ENCODE measurements at regions of chr16 and their contacts with region 1.

Region 1: DNA sequence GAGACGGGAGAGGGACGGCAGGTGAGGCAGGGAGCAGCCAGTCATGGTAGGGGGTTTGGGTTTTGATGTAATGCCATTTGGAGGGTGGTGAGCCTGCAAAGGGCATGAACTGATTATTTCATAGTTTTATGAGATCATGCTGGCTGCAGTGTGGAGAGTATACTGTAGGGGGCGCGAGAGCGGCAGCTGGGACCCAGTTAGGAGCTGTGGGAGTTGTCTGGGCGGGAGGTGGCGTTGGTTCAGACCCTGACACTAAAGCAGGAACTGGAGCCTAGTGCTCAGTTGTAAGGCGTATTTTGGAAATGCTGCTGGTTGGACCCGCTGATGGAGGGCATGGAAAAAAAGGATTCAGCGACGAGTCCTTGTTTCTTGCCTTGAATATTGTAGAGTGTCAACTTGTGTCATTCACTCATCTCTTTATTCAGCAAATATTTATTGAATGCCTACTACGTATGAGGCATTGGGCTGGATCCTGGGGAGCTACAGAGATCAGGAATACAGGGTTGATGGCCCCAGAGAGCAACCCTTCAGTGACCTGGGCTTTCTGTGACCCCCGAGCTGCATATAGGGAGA is 23.7 kb upstream of the KDM8 start:
- DNase-seq: peak; percentile 81 to 86 (median 85)
- H3K4me3 ChIP-seq: no peak overlapping the region
- H3K4me3 Mint-ChIP-seq: peak overlapping the region in 3 of 8 donors; percentile 0 to 64 (median 22)
- H3K27ac ChIP-seq: no peak overlapping the region
- H3K27ac Mint-ChIP-seq: peak overlapping the region; percentile 1 to 93 (median 85)
- H3K4me1 ChIP-seq: peaks cover 25% of the 10 kb centered on the region
- H3K4me1 Mint-ChIP-seq: peaks cover 21 to 46% (median 31%) of the 10 kb centered on the region in 4 donors
- H3K27me3 ChIP-seq: no peaks in the 10 kb centered on the region
- H3K27me3 Mint-ChIP-seq: no peaks in the 10 kb centered on the region

Region 2: DNA sequence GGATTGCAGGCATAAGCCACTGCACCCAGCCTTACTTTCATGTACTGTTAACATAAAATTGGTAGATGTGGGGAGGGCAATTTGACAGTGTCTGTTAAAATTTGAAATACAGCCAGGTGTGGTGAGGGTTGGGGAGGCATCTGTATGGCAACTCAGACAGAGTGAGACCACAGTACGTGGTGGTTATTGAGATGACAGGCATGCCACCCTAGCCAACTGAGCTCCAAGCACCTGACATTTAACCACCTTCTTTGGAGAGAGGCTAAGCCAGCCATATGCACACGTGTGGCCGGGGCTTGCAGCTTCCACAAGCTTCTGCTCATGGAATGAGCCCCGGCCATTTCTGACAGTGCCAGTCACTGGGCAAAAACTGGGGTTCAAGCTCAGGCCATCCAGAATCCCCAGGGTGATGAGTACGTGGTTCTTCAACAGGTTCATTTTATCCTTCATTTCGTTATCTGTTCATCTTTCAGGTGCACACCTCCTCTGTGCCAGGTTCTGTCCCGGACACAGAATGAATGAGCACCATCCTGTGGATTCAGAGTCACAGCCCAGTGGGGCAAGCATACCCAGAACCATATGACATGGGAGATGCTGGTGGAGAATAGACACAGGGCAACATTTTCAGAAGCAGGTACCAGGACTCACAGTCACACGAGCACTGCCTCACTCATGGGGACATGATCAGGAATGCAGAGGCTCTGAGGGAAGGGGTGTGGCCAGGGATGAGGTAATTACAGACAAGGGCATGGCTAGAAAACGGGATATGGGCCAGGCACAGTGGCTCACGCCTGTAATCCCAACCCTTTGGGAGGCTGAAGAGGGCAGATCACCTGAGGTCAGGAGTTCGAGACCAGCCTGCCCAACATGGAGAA is 76.6 kb before region 1 on chr16:
- CTCF ChIA-PET with region 1: no interaction called
- POLR2A ChIA-PET with region 1: no interaction called
- intact Hi-C with region 1: no loop called
- DNase-seq: no peak
- H3K4me3 ChIP-seq: no peak overlapping the region
- H3K4me3 Mint-ChIP-seq: no peak overlapping the region
- H3K27ac ChIP-seq: no peak overlapping the region
- H3K27ac Mint-ChIP-seq: no peak overlapping the region
- H3K4me1 ChIP-seq: no peaks in the 10 kb centered on the region
- H3K4me1 Mint-ChIP-seq: no peaks in the 10 kb centered on the region
- H3K27me3 ChIP-seq: peaks cover 4% of the 10 kb centered on the region
- H3K27me3 Mint-ChIP-seq: peaks cover 6% of the 10 kb centered on the region in 2 donors

Region 3: GRCh38 chr16:27203429-27204231 is 24.0 kb after region 1 on chr16 and contains the start of gene KDM8:
- CTCF ChIA-PET with region 1: interaction called, 164 read pairs
- POLR2A ChIA-PET with region 1: interaction called, 95 read pairs
- intact Hi-C with region 1: no loop called
- DNase-seq: peak; percentile 99 to 100 (median 100)
- H3K4me3 ChIP-seq: peak within 1 kb of the TSS; percentile 61 to 85
- H3K4me3 Mint-ChIP-seq: peak within 1 kb of the TSS; percentile 97 to 100 (median 99)
- H3K27ac ChIP-seq: peak within 1 kb of the TSS; percentile 97
- H3K27ac Mint-ChIP-seq: peak within 1 kb of the TSS; percentile 92 to 100 (median 100)
- H3K4me1 ChIP-seq: peaks cover 60% of the 10 kb centered on the region
- H3K4me1 Mint-ChIP-seq: peaks cover 40 to 62% (median 48%) of the 10 kb centered on the region in 4 donors
- H3K27me3 ChIP-seq: no peaks in the 10 kb centered on the region
- H3K27me3 Mint-ChIP-seq: no peaks in the 10 kb centered on the region
- total RNA-seq, gene KDM8: 28.6 to 31.0 TPM

Region 4: GRCh38 chr16:27253526-27253930 is 73.9 kb after region 1 on chr16:
- CTCF ChIA-PET with region 1: no interaction called
- POLR2A ChIA-PET with region 1: no interaction called
- intact Hi-C with region 1: no loop called
- DNase-seq: no peak
- H3K4me3 ChIP-seq: no peak overlapping the region
- H3K4me3 Mint-ChIP-seq: peak overlapping the region in 5 of 8 donors; percentile 17 to 63 (median 50)
- H3K27ac ChIP-seq: no peak overlapping the region
- H3K27ac Mint-ChIP-seq: peak overlapping the region in 4 of 7 donors; percentile 30 to 68 (median 60)
- H3K4me1 ChIP-seq: peaks cover 23% of the 10 kb centered on the region
- H3K4me1 Mint-ChIP-seq: peaks cover 34 to 54% (median 46%) of the 10 kb centered on the region in 4 donors
- H3K27me3 ChIP-seq: no peaks in the 10 kb centered on the region
- H3K27me3 Mint-ChIP-seq: no peaks in the 10 kb centered on the region

Region 5: GRCh38 chr16:27313422-27314160 is 134.0 kb after region 1 on chr16 and contains the start of gene IL4R:
- CTCF ChIA-PET with region 1: interaction called, 11 read pairs
- POLR2A ChIA-PET with region 1: interaction called, 3 read pairs
- intact Hi-C with region 1: loop called (anchors 1 kb)
- DNase-seq: peak; percentile 66 to 77 (median 69)
- H3K4me3 ChIP-seq: peak within 1 kb of the TSS; percentile 76 to 92
- H3K4me3 Mint-ChIP-seq: peak within 1 kb of the TSS; percentile 89 to 98 (median 94)
- H3K27ac ChIP-seq: peak within 1 kb of the TSS; percentile 96
- H3K27ac Mint-ChIP-seq: peak within 1 kb of the TSS; percentile 94 to 99 (median 99)
- H3K4me1 ChIP-seq: peaks cover 47% of the 10 kb centered on the region
- H3K4me1 Mint-ChIP-seq: peaks cover 30 to 53% (median 42%) of the 10 kb centered on the region in 4 donors
- H3K27me3 ChIP-seq: no peaks in the 10 kb centered on the region
- H3K27me3 Mint-ChIP-seq: no peaks in the 10 kb centered on the region
- total RNA-seq, gene IL4R: 143 to 152 TPM

Region 6: DNA sequence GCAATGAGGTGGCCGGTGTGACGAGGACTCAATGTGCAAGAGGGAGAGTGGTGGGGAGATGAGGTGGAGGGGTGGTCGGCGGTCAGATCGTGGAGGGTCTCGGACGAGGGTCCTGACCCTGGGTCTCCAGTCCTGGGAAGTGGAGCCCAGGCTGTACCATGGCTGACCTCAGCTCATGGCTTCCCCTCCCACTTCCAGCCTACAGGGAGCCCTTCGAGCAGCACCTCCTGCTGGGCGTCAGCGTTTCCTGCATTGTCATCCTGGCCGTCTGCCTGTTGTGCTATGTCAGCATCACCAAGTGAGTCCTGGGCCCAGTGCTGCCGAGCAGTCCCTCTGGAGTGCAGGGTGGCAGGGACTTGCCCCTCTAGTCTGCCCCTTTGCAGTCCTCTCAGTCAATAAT is 176.0 kb after region 1 on chr16:
- CTCF ChIA-PET with region 1: interaction called, 19 read pairs
- POLR2A ChIA-PET with region 1: no interaction called
- intact Hi-C with region 1: no loop called
- DNase-seq: peak; percentile 20 to 55 (median 37)
- H3K4me3 ChIP-seq: no peak overlapping the region
- H3K4me3 Mint-ChIP-seq: peak overlapping the region in 1 of 8 donors; percentile 5
- H3K27ac ChIP-seq: no peak overlapping the region
- H3K27ac Mint-ChIP-seq: peak overlapping the region in 6 of 7 donors; percentile 30 to 95 (median 72)
- H3K4me1 ChIP-seq: no peaks in the 10 kb centered on the region
- H3K4me1 Mint-ChIP-seq: peaks cover 12 to 16% (median 14%) of the 10 kb centered on the region in 4 donors
- H3K27me3 ChIP-seq: no peaks in the 10 kb centered on the region
- H3K27me3 Mint-ChIP-seq: no peaks in the 10 kb centered on the region

Region 7: GRCh38 chr16:27455700-27456099 is 276.1 kb after region 1 on chr16:
- CTCF ChIA-PET with region 1: interaction called, 36 read pairs
- POLR2A ChIA-PET with region 1: interaction called, 4 read pairs
- intact Hi-C with region 1: loop called (anchors 1 kb)
- DNase-seq: peak in 3 of 5 donors; percentile 9 to 55 (median 27)
- H3K4me3 ChIP-seq: no peak overlapping the region
- H3K4me3 Mint-ChIP-seq: peak overlapping the region in 3 of 8 donors; percentile 12 to 41 (median 26)
- H3K27ac ChIP-seq: no peak overlapping the region
- H3K27ac Mint-ChIP-seq: peak overlapping the region in 6 of 7 donors; percentile 58 to 93 (median 68)
- H3K4me1 ChIP-seq: peaks cover 55% of the 10 kb centered on the region
- H3K4me1 Mint-ChIP-seq: peaks cover 26 to 69% (median 54%) of the 10 kb centered on the region in 4 donors
- H3K27me3 ChIP-seq: no peaks in the 10 kb centered on the region
- H3K27me3 Mint-ChIP-seq: no peaks in the 10 kb centered on the region

Measured in CD4-positive, alpha-beta memory T cell (primary cell).